ENCODE measurements at regions of chr2 and their contacts with region 1.

Region 1: GRCh38 chr2:80073134-80073561 is 231.4 kb downstream of the LRRTM1 start:
- DNase-seq: no peak

Region 2: GRCh38 chr2:80238692-80239469 is 165.7 kb after region 1 on chr2:
- intact Hi-C with region 1: loop called (anchors 2 kb)
- DNase-seq: no peak

Region 3: GRCh38 chr2:80312282-80312839 is 239.2 kb after region 1 on chr2:
- intact Hi-C with region 1: loop called (anchors 2 kb)
- DNase-seq: no peak